OCI-LY7 (cell line): ENCODE measurements at regions of chr7 and their contacts with region 1.

Region 1: DNA sequence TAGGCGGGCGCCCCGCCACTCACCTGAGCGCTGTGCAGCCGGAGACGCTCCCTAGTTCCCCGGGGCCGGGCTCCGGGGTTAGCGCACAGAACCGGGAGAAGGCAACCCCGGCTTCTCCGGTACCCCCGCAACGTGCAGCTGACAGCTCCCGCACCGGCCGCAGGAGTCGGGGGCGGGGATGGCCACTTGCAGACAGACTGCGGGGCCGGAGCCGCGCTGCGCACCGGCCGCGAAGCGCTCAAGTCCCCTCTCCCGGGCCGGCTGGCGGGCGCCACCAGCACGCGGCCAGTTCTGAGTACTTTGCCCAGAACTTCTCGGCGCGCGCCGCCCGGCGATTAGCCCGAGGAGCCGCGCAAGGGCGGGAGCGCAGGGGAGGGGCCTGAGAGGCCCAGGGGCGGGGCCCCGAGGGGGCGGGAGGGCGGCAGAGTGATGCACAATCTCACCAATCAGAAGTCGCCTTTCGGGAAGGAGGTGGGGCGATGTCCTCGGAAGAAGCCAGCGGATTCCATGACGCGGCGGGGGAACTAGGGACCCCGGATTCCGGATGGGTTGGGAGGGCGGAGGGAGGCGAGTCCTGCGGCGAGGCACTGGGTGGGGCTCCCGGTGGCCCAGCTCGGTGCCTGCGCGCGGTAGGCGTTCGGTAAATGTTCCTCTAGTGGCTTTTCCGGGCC is at the start of gene OSBPL3:
- DNase-seq: peak; percentile 97
- H3K4me3 ChIP-seq: peak within 1 kb of the TSS; percentile 88
- H3K27ac ChIP-seq: peak within 1 kb of the TSS; percentile 60
- H3K4me1 ChIP-seq: peaks cover 63% of the 10 kb centered on the region
- CTCF ChIP-seq: no peak
- total RNA-seq, gene OSBPL3: 24.6 and 28.7 TPM in 2 replicates

Region 2: GRCh38 chr7:24715661-24716479 is 264.1 kb before region 1 on chr7:
- CTCF ChIA-PET with region 1: interaction called, 3 read pairs
- POLR2A ChIA-PET with region 1: no interaction called
- intact Hi-C with region 1: loop called (anchors 5 kb)
- DNase-seq: peak; percentile 90
- H3K4me3 ChIP-seq: peak overlapping the region; percentile 53
- H3K27ac ChIP-seq: peak overlapping the region; percentile 93
- H3K4me1 ChIP-seq: peaks cover 75% of the 10 kb centered on the region
- CTCF ChIP-seq: peak; percentile 69

Region 3: DNA sequence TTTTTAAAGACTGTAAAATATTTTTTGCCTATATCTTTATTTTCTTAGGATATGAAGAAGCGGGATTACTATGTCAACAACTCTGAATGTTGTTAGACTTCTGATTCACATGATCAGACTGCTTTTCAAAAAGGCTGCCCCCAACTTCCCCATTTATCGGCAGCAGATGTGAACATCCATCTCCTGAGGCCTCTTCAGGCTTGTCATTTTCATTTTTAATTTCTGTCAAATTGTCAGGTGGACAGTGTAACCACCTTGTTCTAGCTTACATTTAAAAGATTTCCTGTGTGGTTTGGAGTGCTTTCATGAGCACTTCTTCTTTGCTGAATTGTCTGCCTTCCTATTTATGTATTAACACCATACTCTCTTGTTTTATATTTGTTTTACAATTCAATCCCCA is 143.9 kb before region 1 on chr7:
- CTCF ChIA-PET with region 1: interaction called, 4 read pairs
- POLR2A ChIA-PET with region 1: interaction called, 3 read pairs
- intact Hi-C with region 1: loop called (anchors 1 kb)
- DNase-seq: peak; percentile 93
- H3K4me3 ChIP-seq: peak overlapping the region; percentile 34
- H3K27ac ChIP-seq: peak overlapping the region; percentile 95
- H3K4me1 ChIP-seq: peaks cover 89% of the 10 kb centered on the region
- CTCF ChIP-seq: no peak

Region 4: DNA sequence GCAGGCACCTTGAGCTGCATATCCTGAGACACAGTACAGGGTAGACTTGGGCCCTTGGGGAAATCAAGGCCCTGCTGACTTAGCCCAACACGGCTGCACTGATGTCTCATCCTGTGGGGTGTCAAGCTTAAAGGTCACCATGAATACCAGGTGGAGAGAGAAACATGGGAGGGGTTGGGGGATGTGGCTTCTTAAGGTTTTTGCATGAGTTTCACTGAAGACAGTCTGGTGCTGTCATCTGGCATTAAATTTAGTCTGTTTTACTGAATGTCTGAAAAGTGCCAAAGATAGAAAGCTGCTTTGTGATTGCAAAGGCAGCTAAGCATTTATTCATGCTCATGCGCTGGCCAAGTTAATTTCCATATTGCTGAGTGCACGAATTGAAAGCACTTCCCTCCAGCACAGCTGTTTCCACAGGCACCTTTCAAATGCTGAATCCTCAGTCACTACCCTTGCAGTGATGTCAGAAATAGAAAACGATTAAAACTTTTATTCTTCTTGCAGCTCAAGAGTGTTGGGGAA is 102.1 kb before region 1 on chr7:
- CTCF ChIA-PET with region 1: interaction called, 5 read pairs
- POLR2A ChIA-PET with region 1: interaction called, 7 read pairs
- intact Hi-C with region 1: loop called (anchors 1 kb)
- DNase-seq: peak; percentile 94
- H3K4me3 ChIP-seq: peak overlapping the region; percentile 51
- H3K27ac ChIP-seq: peak overlapping the region; percentile 93
- H3K4me1 ChIP-seq: peaks cover 98% of the 10 kb centered on the region
- CTCF ChIP-seq: no peak

Region 5: DNA sequence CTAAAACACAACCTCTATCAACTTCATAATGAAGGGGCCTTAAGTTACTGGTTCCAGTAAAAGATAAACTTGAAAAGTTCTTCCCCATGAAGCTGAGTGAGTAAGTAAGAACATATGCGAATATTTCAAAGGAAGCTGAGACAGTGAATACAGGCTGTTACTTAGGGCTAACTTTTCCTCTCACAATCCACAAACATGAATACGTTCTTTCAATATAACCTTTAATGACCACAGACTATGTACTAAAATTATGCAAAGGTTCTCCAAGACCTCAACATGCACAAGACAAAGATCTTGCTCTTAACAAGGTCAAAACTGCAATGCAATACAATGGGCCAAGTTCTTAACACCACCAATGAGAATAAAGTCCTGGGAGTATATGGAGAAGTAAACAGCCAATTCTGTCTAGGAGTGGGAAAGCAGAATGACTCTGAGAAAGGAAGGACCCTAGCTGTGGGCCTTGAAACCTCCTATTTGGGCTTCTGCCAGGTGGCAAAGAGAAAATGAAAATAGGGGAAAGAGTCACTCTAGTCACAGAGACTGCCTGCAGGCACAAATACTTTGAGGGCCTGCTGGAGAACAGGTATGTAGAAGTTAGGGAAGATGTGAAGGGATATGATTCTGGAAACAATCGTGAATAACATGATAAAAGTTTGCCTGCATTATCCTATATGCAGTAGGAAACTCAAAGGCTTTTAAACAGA is 43.7 kb before region 1 on chr7:
- CTCF ChIA-PET with region 1: no interaction called
- POLR2A ChIA-PET with region 1: interaction called, 7 read pairs
- intact Hi-C with region 1: loop called (anchors 2 kb)
- DNase-seq: no peak
- H3K4me3 ChIP-seq: no peak overlapping the region
- H3K27ac ChIP-seq: peak overlapping the region; percentile 27
- H3K4me1 ChIP-seq: peaks cover 82% of the 10 kb centered on the region
- CTCF ChIP-seq: no peak

Region 6: GRCh38 chr7:24991353-24991752 is 11.4 kb after region 1 on chr7:
- CTCF ChIA-PET with region 1: no interaction called
- POLR2A ChIA-PET with region 1: interaction called, 11 read pairs
- intact Hi-C with region 1: no loop called
- DNase-seq: no peak
- H3K4me3 ChIP-seq: no peak overlapping the region
- H3K27ac ChIP-seq: no peak overlapping the region
- H3K4me1 ChIP-seq: no peaks in the 10 kb centered on the region
- CTCF ChIP-seq: no peak

Region 7: DNA sequence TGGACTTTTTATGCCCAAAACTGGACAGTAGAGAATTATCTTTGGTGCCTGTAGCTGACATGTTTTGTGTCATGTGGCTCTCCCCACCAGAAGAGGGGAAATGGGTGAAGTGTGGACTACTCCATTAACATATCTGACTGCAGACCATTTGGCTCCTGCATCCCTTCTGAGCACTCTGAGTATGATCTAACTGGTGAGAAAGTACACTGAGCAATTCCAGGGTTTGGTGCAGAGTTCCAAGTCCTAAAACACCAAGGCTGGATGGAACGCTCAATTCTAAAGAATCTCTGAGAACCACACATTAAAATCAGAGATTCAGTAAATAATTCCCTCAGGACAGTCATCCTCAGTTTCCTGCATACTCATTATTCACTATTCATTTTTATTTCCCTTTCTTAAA is 22.8 kb after region 1 on chr7:
- CTCF ChIA-PET with region 1: no interaction called
- POLR2A ChIA-PET with region 1: no interaction called
- intact Hi-C with region 1: no loop called
- DNase-seq: no peak
- H3K4me3 ChIP-seq: no peak overlapping the region
- H3K27ac ChIP-seq: no peak overlapping the region
- H3K4me1 ChIP-seq: no peaks in the 10 kb centered on the region
- CTCF ChIP-seq: no peak

Region 8: DNA sequence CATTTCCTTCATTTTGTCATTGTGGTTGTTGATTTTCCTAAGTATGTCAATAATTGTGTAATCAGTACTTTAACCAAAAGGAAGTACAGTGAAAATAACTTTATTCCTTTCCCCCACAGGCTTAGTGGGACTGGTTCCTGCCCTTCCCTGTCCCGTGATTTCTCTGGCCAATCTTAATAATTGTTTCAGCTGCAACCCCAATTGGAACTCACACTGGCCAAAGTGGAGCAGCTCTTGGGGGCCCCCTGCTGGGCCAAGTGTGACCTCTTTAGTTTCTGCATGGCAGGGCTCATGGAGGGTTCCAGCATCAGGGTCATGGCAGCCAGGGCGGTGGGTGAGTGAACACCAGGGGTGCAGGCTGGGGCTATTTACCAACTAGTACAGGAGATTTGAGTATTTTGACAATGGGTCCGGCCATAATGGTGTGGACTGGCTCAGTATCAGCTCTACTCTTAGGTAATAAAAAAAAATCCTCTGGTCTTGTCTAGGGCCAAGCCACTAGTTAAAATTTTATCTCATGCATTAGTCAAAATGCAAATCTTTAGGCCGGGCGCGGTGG is 113.3 kb after region 1 on chr7:
- CTCF ChIA-PET with region 1: no interaction called
- POLR2A ChIA-PET with region 1: interaction called, 5 read pairs
- intact Hi-C with region 1: loop called (anchors 2 kb)
- DNase-seq: peak; percentile 86
- H3K4me3 ChIP-seq: no peak overlapping the region
- H3K27ac ChIP-seq: no peak overlapping the region
- H3K4me1 ChIP-seq: peaks cover 41% of the 10 kb centered on the region
- CTCF ChIP-seq: peak; percentile 97